Sigmoid colon (tissue), 7 donors: ENCODE measurements at regions of chrX and their contacts with region 1.

Region 1: DNA sequence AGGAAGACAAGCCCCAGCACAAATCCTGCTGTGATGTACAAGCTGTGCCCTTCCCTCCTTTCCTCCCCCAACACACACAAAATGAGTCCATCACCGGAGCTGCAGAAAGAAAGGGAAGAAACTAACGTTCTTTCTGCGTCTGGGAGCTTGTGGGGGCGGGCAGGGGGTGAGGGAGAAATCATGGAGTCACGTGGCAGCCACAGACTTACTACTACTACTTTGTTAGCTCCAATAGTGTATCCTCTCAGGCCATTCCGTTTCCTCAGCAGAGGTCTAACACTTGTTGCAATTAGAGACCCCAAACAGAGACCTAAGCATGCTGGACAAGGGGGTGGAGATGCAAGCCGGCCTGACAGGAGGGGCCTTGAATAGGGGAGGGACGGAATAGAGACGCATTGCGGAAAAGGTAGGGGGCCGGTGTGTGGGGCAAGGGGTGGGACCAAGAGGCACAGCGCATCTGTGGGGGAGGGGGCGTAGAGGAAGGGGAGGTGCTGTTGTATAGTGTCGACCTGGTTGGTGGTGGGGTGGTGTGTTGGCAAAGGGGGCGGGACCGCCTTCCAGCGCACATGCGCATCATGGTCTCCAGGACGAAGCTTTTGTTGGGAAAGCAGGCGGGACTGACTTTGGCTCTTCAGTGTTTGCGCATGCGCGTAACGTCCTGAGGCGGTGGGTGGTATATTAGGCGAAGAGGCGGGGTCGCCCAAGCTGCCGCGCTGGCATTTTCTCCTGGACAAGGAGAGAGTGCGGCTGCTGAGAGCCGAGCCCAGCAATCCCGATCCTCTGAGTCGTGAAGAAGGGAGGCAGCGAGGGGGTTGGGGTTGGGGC is at the start of gene MAGED1:
- DNase-seq: peak; percentile 95
- H3K4me3 ChIP-seq: peak within 1 kb of the TSS; percentile 43 to 59 (median 55)
- H3K27ac ChIP-seq: peak within 1 kb of the TSS; percentile 83 to 88 (median 85)
- H3K4me1 ChIP-seq: peaks cover 0 to 21% (median 13%) of the 10 kb centered on the region in 4 donors
- H3K27me3 ChIP-seq: no peaks in the 10 kb centered on the region
- CTCF ChIP-seq: no peak
- EP300 ChIP-seq: no peak
- POLR2A ChIP-seq: peak; percentile 58 to 59
- total RNA-seq, gene MAGED1: 34.6 to 51.4 (median 41.9) TPM

Region 2: GRCh38 chrX:50812995-50813826 is 1079.9 kb before region 1 on chrX:
- intact Hi-C with region 1: loop called (anchors 10 kb)
- DNase-seq: peak; percentile 69
- H3K4me3 ChIP-seq: peak overlapping the region; percentile 42 to 54 (median 47)
- H3K27ac ChIP-seq: peak overlapping the region; percentile 60 to 70 (median 64)
- H3K4me1 ChIP-seq: peaks cover 0 to 4% (median 0%) of the 10 kb centered on the region in 4 donors
- H3K27me3 ChIP-seq: no peaks in the 10 kb centered on the region
- CTCF ChIP-seq: no peak
- EP300 ChIP-seq: no peak
- POLR2A ChIP-seq: no peak

Region 3: GRCh38 chrX:51743179-51743957 is 149.8 kb before region 1 on chrX and contains the start of gene GSPT2:
- intact Hi-C with region 1: loop called (anchors 10 kb)
- DNase-seq: peak; percentile 86
- H3K4me3 ChIP-seq: peak within 1 kb of the TSS; percentile 52 to 61 (median 57)
- H3K27ac ChIP-seq: peak within 1 kb of the TSS; percentile 69 to 77 (median 73)
- H3K4me1 ChIP-seq: peaks cover 0 to 4% (median 0%) of the 10 kb centered on the region in 4 donors
- H3K27me3 ChIP-seq: no peaks in the 10 kb centered on the region
- CTCF ChIP-seq: no peak
- EP300 ChIP-seq: no peak
- POLR2A ChIP-seq: no peak
- total RNA-seq, gene GSPT2: 3.7 to 7.5 (median 5.5) TPM

Region 4: DNA sequence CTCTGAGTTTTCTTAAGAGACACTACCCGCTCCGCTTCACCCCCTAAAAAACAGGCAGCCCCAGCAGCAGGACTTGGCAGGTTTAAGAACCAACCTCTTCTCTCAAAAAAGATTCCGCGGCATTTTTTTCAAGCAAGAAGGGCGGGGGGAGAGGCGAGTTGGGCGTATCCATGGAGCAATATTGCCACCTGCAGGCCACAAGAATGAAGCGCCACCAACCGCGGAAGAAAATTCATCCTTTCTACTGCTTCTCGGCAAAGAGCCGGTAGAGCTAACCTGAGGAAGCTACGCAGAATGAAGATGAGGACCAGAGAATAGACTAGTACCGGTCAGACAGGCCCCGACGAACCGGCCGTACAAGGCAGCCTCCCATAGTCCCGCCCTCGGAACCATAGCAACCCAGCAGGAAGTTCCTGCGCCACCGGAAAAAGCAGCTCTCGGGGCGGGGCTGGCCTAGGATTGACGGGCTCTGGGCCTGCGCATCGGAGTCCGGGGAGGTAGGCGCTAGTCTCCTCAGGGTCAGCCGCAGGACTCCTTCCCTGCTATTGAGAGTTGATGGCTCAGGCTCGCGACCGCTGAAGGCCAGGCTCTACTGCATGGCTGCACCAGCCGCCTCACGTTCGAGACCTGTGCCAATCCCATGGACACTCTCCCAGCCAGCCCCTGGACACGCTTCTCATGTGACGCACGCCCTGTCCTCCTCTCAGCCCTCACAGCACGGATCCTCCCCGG is 368.5 kb after region 1 on chrX:
- intact Hi-C with region 1: loop called (anchors 2 kb)
- DNase-seq: peak; percentile 98
- H3K4me3 ChIP-seq: peak overlapping the region; percentile 28 to 56 (median 50)
- H3K27ac ChIP-seq: peak overlapping the region; percentile 82 to 86 (median 85)
- H3K4me1 ChIP-seq: peaks cover 0 to 10% (median 2%) of the 10 kb centered on the region in 4 donors
- H3K27me3 ChIP-seq: no peaks in the 10 kb centered on the region
- CTCF ChIP-seq: peak; percentile 79 to 99 (median 94)
- EP300 ChIP-seq: no peak
- POLR2A ChIP-seq: no peak